ENCODE measurements at regions of chr19 and their contacts with region 1.

Region 1: DNA sequence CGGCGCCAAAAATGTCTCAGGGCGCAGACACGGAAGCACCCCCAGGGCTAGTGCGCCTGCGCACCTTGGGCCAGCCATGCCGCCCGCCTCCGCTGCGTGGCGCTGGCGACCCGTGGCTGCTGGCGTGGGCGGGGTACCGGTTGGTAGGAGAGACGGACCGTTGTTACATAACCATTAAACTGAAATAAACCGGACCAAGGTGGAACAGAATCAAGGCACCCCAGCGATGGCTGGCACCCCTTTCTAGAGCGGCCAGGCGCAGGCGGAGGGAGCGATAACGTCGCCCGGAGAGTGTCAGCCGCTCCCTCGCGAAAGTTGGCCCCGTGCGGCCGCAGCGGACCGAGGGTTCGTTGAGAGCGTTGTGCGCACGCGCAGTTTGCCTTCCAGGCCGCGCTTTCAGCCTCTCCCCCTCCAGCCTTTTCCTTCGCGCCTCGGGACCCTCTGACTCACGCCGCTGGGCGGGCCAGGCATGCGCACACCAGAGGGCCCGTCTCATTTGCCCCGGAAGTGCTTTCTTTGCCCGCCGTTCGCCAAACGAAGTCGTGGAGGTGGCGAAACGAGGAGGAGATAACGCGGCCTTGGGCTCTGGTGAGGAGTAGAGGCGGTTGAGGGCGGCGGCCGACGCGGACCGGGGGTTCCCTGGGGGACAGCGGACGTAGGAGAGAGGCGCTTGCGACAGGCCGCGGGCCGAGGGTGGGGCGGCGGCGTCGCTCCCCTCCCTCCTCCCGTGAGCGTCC is at the starts of genes PLEKHJ1 and SF3A2:
- DNase-seq: peak; percentile 99
- H3K4me3 ChIP-seq: peak within 1 kb of the TSS; percentile 96
- H3K27ac ChIP-seq: peak within 1 kb of the TSS; percentile 88
- H3K4me1 ChIP-seq: peaks cover 39% of the 10 kb centered on the region
- H3K27me3 ChIP-seq: no peaks in the 10 kb centered on the region
- CTCF ChIP-seq: peak; percentile 99
- total RNA-seq, gene PLEKHJ1: 73.7 and 75.9 TPM in 2 replicates
- total RNA-seq, gene SF3A2: 186 and 187 TPM in 2 replicates

Region 2: DNA sequence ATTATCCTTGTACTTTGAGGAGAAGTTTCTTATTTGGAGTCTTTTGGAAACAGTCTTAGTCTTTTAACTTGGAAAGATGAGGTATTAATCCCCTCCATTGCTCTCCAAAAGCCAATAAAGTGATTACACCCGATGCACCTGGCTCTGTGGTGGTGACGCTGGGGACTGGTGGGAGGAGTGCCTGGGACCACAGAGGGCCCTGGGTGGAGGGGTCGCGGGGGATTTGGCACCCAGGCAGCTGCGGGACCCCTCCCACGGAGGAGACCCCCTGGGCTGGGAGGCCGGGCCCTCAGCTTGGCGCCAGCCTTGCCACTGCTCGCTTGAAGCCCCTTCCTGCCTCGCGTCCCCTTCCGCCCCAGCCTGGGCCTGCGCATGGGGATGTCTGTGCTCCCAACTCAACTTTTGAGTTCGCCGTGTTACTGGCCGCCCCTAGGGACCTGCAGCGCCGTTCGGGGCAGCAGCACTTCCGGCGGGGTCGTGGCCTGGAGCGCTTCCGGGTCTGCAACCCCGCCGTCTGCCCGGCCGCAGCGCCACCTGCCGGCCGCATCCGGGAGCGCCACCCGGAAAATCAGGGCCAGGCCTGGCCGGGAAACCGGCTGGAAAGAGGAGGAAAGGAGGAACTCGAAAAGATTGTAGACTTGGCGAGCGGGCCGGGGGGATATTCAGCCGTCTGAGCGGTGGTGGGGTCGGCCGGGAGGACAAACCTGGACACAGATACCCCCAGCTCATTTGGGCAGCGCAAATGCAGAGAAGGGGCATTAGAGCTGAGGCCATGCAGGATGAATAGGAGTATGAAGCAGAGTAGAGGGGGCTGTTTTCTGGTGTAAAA is 37.1 kb after region 1 on chr19:
- CTCF ChIA-PET with region 1: no interaction called
- POLR2A ChIA-PET with region 1: no interaction called
- intact Hi-C with region 1: loop called (anchors 2 kb)
- DNase-seq: peak; percentile 93
- H3K4me3 ChIP-seq: peak overlapping the region; percentile 100
- H3K27ac ChIP-seq: peak overlapping the region; percentile 47
- H3K4me1 ChIP-seq: peaks cover 21% of the 10 kb centered on the region
- H3K27me3 ChIP-seq: no peaks in the 10 kb centered on the region
- CTCF ChIP-seq: peak; percentile 98

Region 3: DNA sequence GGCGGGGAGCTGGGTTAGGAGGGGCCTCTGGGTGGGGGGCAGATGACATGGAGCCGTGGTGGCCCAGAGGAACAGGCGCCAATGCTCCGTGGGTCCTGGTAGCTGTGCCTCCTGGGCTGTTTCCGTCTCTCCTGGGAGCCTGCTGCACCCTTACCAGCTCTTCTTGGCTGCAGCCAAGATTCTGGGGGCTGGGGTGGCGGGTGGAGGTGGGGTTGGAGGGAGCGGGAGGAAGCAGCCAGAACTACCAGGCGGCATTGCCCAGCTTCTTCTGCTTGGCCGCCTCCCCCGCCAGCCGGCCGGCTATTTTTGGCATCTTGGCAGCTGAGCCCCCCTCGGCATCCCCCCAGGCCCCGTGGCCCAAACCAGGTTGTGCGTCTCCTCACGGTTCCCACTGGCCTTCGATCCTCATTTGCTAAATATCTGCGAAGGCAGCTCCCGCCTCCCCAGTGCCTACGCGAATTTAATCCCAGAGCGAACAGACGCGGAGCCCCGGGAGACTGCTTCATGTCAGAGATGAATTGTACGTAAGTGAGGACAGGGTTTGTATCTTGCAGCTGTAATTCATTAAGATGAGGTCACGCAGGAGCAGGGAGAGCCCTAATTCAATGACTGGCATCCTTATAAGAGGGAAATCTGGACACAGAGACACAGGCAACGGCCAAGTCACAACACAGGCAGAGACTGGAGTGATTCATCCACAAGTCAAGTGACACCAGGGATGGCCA is 58.3 kb after region 1 on chr19:
- CTCF ChIA-PET with region 1: no interaction called
- POLR2A ChIA-PET with region 1: interaction called, 11 read pairs
- intact Hi-C with region 1: no loop called
- DNase-seq: peak; percentile 66
- H3K4me3 ChIP-seq: no peak overlapping the region
- H3K27ac ChIP-seq: no peak overlapping the region
- H3K4me1 ChIP-seq: peaks cover 18% of the 10 kb centered on the region
- H3K27me3 ChIP-seq: peaks cover 31% of the 10 kb centered on the region
- CTCF ChIP-seq: no peak

Region 4: DNA sequence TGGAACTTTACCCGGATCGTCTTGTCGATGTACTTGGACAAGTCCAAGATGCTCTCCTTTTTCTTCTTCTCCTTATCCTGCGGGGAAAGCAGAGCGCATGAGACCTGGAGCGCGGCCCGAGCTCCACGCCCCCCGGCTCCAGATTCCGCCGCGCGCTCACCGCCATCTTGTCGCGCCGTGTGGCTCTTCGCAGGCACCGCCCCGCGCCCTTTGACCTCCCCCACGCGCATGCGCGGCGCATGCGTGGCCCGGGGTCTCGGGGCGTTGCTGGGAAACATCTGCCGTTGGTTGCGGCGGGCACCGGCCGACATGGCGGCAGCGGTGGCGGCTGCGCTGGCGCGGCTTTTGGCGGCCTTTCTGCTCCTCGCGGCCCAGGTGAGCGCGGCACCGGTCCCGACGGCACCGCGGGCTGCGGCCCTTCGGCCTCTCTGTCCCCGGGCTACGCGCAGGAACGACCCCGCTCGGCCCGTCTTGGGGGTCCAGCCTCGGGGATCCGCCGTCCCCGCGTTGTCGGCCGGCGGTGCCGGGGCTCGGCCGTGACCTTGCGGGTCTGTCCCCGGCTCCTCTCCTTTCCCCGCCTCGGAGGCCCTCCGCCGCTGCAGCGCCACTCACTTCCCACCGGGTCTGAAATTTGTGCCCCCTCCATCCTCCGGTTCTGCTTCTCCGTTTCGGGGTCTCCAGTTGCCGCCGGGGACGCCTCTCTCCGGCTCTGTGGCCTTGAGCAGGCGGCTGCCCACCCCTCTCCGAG is 92.1 kb after region 1 on chr19 and contains the starts of genes LSM7 and SPPL2B:
- CTCF ChIA-PET with region 1: no interaction called
- POLR2A ChIA-PET with region 1: interaction called, 12 read pairs
- intact Hi-C with region 1: no loop called
- DNase-seq: peak; percentile 94
- H3K4me3 ChIP-seq: peak within 1 kb of the TSS; percentile 99
- H3K27ac ChIP-seq: peak within 1 kb of the TSS; percentile 85
- H3K4me1 ChIP-seq: peaks cover 29% of the 10 kb centered on the region
- H3K27me3 ChIP-seq: no peaks in the 10 kb centered on the region
- CTCF ChIP-seq: no peak
- total RNA-seq, gene LSM7: 137 and 152 TPM in 2 replicates
- total RNA-seq, gene SPPL2B: 86.8 and 94.2 TPM in 2 replicates

Region 5: DNA sequence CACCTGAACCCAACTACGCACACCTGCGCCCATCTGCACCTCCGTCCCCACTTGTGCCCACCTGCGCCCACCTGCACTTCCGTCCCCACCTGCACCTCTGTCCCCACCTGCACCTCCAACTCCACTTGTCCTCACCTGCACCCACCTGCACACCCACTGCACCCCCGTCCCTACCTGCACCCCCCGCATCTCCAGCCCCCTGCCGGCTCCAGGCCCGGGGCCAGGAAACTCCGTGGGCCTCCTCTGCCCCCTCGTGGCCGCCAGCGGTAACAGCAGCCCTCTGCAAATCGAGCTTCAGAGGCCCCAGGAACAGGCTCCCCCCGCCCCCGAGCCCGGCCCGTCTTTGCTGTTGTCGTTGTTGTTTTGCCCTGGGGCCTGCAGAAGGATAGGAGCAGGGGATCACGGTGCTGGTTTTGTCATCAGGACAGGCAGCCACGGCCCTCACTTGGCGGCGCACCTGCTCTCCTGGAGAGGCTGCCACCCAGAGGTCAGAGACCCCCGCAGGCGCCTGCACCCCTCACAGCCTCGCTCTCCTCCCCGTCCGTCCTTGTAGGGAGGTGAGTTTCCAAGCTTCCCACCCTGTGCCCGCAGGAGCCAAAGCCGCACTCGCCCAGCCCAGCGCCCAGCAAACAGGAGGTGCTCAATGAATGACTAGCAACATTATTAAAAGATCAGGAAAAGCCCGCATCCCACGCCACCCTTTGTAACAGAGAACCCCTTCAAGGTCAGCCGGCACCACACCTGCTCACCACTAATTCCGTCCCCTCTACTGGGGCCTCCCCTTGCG is 400.6 kb after region 1 on chr19:
- CTCF ChIA-PET with region 1: no interaction called
- POLR2A ChIA-PET with region 1: no interaction called
- intact Hi-C with region 1: loop called (anchors 5 kb)
- DNase-seq: peak; percentile 65
- H3K4me3 ChIP-seq: no peak overlapping the region
- H3K27ac ChIP-seq: no peak overlapping the region
- H3K4me1 ChIP-seq: peaks cover 7% of the 10 kb centered on the region
- H3K27me3 ChIP-seq: peaks cover 13% of the 10 kb centered on the region
- CTCF ChIP-seq: peak; percentile 97

Measured in A673 (cell line).